Naive thymus-derived CD4-positive, alpha-beta T cell (primary cell): ENCODE measurements at regions of chr1 and their contacts with region 1.

Region 1: DNA sequence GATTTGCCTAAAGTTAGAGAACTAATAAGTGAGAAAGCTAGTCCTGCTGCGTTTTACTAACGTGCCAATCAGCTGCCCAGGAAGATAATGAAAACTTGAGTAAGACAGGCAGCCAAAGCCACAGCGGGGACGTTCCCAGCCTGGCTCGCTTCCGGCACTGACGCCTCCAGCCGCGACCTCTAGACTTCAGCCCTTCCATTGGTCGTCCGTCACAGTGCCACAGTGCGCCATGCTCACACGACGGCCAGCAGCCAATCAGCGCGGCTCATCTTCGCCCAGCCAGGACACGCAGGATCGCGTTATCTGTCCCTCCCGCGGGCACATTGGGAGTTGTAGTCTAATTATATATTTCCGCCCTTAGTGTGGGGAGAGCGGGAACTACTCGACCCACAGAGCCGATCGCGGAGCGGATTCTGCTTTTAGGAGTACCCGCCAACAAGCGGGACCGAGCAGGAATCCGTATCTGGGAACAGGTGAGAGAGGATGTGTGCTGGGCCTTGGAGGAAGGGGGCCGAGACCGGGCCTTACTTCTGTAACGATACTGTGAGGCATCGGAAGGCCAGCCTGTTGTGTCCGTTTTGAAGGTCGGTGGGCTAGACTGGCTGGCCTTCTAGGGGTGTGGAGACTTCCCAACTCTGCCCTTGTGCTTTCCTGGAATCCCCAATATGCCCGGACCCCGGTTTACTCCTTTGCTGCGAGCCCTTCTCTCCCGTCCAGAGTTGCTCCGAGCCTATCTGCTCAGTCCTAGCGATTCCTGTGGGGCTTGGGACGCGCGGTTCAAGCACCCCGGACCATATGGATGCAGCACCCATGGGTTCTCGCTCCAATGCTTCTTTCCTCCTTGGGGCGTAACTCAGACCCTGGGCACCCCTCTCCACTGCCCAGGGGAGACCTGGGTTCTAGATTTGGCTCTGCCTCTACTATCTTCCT is at the start of gene FDPS:
- DNase-seq: peak; percentile 83 to 98 (median 95)
- ATAC-seq: peak; percentile 98
- H3K4me3 ChIP-seq: peak within 1 kb of the TSS; percentile 90
- H3K4me3 Mint-ChIP-seq: peak within 1 kb of the TSS; percentile 88 to 99 (median 97)
- H3K27ac ChIP-seq: peak within 1 kb of the TSS; percentile 87
- H3K27ac Mint-ChIP-seq: peak within 1 kb of the TSS; percentile 89 to 98 (median 96)
- H3K4me1 ChIP-seq: peaks cover 11 to 20% of the 10 kb centered on the region in 2 donors
- H3K4me1 Mint-ChIP-seq: peaks cover 12 to 43% (median 27%) of the 10 kb centered on the region in 7 donors
- H3K27me3 ChIP-seq: no peaks in the 10 kb centered on the region
- H3K27me3 Mint-ChIP-seq: no peaks in the 10 kb centered on the region
- total RNA-seq, gene FDPS: 58.5 to 193 (median 79.0) TPM

Region 2: GRCh38 chr1:155261852-155262673 is 46.7 kb before region 1 on chr1 and contains the start of gene SCAMP3:
- CTCF ChIA-PET with region 1: no interaction called
- POLR2A ChIA-PET with region 1: interaction called, 4 read pairs
- intact Hi-C with region 1: loop called (anchors 1 kb)
- DNase-seq: peak; percentile 52 to 89 (median 79)
- ATAC-seq: peak; percentile 99
- H3K4me3 ChIP-seq: peak within 1 kb of the TSS; percentile 88
- H3K4me3 Mint-ChIP-seq: peak within 1 kb of the TSS; percentile 81 to 100 (median 98)
- H3K27ac ChIP-seq: peak within 1 kb of the TSS; percentile 87
- H3K27ac Mint-ChIP-seq: peak within 1 kb of the TSS; percentile 89 to 98 (median 96)
- H3K4me1 ChIP-seq: peaks cover 18 to 19% of the 10 kb centered on the region in 2 donors
- H3K4me1 Mint-ChIP-seq: peaks cover 22 to 42% (median 33%) of the 10 kb centered on the region in 7 donors
- H3K27me3 ChIP-seq: no peaks in the 10 kb centered on the region
- H3K27me3 Mint-ChIP-seq: no peaks in the 10 kb centered on the region
- total RNA-seq, gene SCAMP3: 50.8 to 118 (median 100) TPM

Region 3: DNA sequence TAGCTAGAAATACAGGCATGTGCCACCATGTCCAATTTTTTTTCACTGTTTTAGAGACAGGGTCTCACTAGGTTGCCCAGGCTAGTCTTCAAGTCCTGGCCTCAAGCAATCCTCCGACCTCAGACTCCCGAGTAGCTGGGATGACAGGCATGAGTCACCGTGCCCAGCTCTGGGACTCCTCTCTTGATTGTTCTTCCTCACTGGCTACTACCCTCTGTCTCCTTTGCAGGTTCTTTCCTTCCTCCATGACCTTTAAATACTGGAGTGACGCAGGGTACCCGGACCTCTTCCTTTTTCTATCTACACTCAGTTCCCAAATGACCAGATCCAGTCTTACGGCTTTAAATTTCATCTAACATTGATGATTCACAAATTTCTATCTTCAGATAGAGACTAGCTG is 218.9 kb after region 1 on chr1:
- CTCF ChIA-PET with region 1: no interaction called
- POLR2A ChIA-PET with region 1: no interaction called
- intact Hi-C with region 1: no loop called
- DNase-seq: no peak
- ATAC-seq: peak; percentile 29
- H3K4me3 ChIP-seq: no peak overlapping the region
- H3K4me3 Mint-ChIP-seq: no peak overlapping the region
- H3K27ac ChIP-seq: no peak overlapping the region
- H3K27ac Mint-ChIP-seq: no peak overlapping the region
- H3K4me1 ChIP-seq: peaks cover 4 to 6% of the 10 kb centered on the region in 2 donors
- H3K4me1 Mint-ChIP-seq: peaks cover 24 to 61% (median 42%) of the 10 kb centered on the region in 7 donors
- H3K27me3 ChIP-seq: no peaks in the 10 kb centered on the region
- H3K27me3 Mint-ChIP-seq: no peaks in the 10 kb centered on the region